PC-3 (cell line): ENCODE measurements at regions of chr9 and their contacts with region 1.

Region 1: DNA sequence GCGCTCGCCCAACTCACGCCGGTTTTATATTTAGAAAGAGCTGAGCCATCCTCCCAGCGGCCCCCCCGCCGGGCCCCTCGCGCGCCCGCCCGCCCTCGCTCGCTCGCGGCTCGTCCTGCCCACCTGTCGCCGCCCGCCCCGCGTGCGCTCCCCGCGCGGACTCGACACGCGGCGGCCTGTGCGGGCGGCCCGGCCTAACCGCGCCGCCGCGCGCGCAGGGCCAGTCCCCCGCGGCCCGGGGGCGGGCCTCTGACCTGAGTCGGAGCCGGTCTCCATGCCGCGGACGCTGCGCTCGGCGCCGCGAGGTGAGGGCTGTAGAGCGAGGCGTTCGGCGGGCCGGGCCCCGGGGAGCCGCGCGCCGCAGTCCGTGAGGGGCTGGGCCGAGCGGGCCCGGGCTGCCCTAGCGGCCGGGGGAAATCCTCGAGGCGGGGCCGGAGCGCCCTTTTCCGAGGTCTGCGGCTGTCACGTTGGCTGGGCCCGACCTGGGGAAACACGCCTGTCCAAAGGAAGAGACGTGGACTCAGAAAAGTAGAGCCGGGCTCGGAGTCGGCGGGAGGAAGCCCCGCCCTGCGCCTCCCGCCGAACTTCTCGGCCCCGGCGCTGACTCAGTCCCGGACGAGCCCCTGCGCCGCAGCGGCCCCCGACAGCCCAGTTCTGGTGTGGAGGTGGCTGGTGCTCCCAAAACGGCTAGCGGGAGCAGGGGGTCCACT is at the start of gene ECPAS:
- DNase-seq: peak; percentile 77
- ATAC-seq: peak; percentile 65
- H3K4me3 ChIP-seq: peak within 1 kb of the TSS; percentile 97
- H3K27ac ChIP-seq: peak within 1 kb of the TSS; percentile 56
- H3K4me1 ChIP-seq: peaks cover 10% of the 10 kb centered on the region
- H3K27me3 ChIP-seq: no peaks in the 10 kb centered on the region
- CTCF ChIP-seq: no peak
- total RNA-seq, gene ECPAS: 69.0 and 87.3 TPM in 2 replicates

Region 2: GRCh38 chr9:111412280-111412679 is 71.7 kb before region 1 on chr9:
- CTCF ChIA-PET with region 1: no interaction called
- POLR2A ChIA-PET with region 1: no interaction called
- intact Hi-C with region 1: no loop called
- DNase-seq: no peak
- ATAC-seq: no peak
- H3K4me3 ChIP-seq: no peak overlapping the region
- H3K27ac ChIP-seq: no peak overlapping the region
- H3K4me1 ChIP-seq: no peaks in the 10 kb centered on the region
- H3K27me3 ChIP-seq: no peaks in the 10 kb centered on the region
- CTCF ChIP-seq: no peak

Region 3: DNA sequence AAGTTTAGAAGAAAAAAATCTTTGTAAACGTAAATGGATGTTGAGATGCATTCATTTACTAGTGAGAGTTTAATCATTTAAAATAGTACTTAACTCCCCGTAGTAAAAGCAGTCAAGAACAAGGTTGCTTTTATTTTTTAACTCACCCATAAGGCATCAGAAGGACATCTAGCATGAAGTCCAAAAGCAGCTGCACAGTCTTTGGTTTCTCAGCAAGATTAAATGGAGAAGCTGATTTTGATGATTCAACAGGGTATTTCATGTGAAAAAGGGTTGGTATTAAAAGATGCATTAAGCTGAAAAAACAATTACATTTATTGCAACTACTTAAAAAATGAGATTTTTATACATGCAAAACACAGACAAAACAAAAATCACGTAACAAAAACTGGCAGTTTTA is 43.8 kb before region 1 on chr9:
- CTCF ChIA-PET with region 1: no interaction called
- POLR2A ChIA-PET with region 1: no interaction called
- intact Hi-C with region 1: loop called (anchors 5 kb)
- DNase-seq: no peak
- ATAC-seq: no peak
- H3K4me3 ChIP-seq: no peak overlapping the region
- H3K27ac ChIP-seq: no peak overlapping the region
- H3K4me1 ChIP-seq: no peaks in the 10 kb centered on the region
- H3K27me3 ChIP-seq: no peaks in the 10 kb centered on the region
- CTCF ChIP-seq: no peak

Region 4: GRCh38 chr9:111525056-111525977 is 41.3 kb after region 1 on chr9 and contains the start of gene ZNF483:
- CTCF ChIA-PET with region 1: no interaction called
- POLR2A ChIA-PET with region 1: no interaction called
- intact Hi-C with region 1: loop called (anchors 2 kb)
- DNase-seq: peak; percentile 83
- ATAC-seq: peak; percentile 86
- H3K4me3 ChIP-seq: peak within 1 kb of the TSS; percentile 74
- H3K27ac ChIP-seq: peak within 1 kb of the TSS; percentile 20
- H3K4me1 ChIP-seq: peaks cover 7% of the 10 kb centered on the region; the same call in 1 of the 2 replicates
- H3K27me3 ChIP-seq: no peaks in the 10 kb centered on the region
- CTCF ChIP-seq: no peak
- total RNA-seq, gene ZNF483: 3.0 and 3.9 TPM in 2 replicates

Region 5: GRCh38 chr9:112486221-112487007 is 1002.4 kb after region 1 on chr9 and contains the start of gene KIAA1958:
- CTCF ChIA-PET with region 1: no interaction called
- POLR2A ChIA-PET with region 1: no interaction called
- intact Hi-C with region 1: no loop called
- DNase-seq: peak; percentile 74
- ATAC-seq: peak; percentile 88
- H3K4me3 ChIP-seq: peak within 1 kb of the TSS; percentile 96
- H3K27ac ChIP-seq: no peak within 1 kb of the TSS; the same call in 1 of the 2 replicates
- H3K4me1 ChIP-seq: peaks cover 14% of the 10 kb centered on the region
- H3K27me3 ChIP-seq: no peaks in the 10 kb centered on the region
- CTCF ChIP-seq: no peak
- total RNA-seq, gene KIAA1958: 3.7 and 4.2 TPM in 2 replicates